Activated T-helper 2 cell treated with anti-CD3 and anti-CD28 coated beads, Interferon-gamma antibody, Interleukin-2, Interleukin-4, amounts not matched to agents 10 μg/mL and 5 μg/mL and 100 μg/mL, durations not matched to agents 14 hours and 24 hours and 36 hours (primary cell): ENCODE measurements at regions of chr7 and their contacts with region 1.

Region 1: GRCh38 chr7:134690016-134690415 is 43.4 kb downstream of the BPGM start:
- DNase-seq: no peak
- H3K4me3 Mint-ChIP-seq: no peak overlapping the region
- H3K27ac Mint-ChIP-seq: peak overlapping the region; percentile 36
- H3K4me1 Mint-ChIP-seq: peaks cover 25% of the 10 kb centered on the region
- H3K27me3 Mint-ChIP-seq: no peaks in the 10 kb centered on the region

Region 2: DNA sequence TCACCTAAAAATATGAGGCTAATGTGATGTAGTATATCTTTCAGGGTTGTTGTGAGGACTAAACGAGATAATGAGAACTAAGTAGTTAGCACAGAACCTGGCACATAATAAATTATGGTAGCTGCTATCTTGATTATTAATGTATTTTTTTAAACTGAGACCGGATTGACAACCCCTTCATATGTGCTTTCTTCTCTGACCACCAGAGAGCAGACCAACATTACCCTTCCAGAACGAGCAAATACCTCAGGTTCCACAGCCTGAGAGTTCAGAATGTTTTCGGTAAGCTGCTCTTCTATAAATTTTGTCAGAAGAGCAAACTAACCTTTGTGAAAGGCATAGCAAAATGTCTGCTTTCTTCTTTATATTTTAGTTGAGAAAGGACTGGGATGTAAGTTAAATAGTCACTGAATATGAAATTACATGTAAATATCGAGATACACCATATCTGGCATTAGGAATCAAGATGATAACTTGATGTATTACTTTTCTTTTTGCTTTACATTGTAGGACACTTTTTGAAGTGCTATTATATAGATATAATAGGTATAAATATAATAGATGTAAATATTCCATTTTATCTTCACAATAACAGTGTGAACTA is 57.0 kb before region 1 on chr7:
- intact Hi-C with region 1: loop called (anchors 5 kb)
- DNase-seq: no peak
- H3K4me3 Mint-ChIP-seq: no peak overlapping the region
- H3K27ac Mint-ChIP-seq: no peak overlapping the region
- H3K4me1 Mint-ChIP-seq: peaks cover 25% of the 10 kb centered on the region
- H3K27me3 Mint-ChIP-seq: peaks cover 8% of the 10 kb centered on the region

Region 3: GRCh38 chr7:134737566-134738345 is 47.7 kb after region 1 on chr7:
- intact Hi-C with region 1: no loop called
- DNase-seq: peak; percentile 28
- H3K4me3 Mint-ChIP-seq: no peak overlapping the region
- H3K27ac Mint-ChIP-seq: peak overlapping the region; percentile 90
- H3K4me1 Mint-ChIP-seq: peaks cover 55% of the 10 kb centered on the region
- H3K27me3 Mint-ChIP-seq: no peaks in the 10 kb centered on the region

Region 4: DNA sequence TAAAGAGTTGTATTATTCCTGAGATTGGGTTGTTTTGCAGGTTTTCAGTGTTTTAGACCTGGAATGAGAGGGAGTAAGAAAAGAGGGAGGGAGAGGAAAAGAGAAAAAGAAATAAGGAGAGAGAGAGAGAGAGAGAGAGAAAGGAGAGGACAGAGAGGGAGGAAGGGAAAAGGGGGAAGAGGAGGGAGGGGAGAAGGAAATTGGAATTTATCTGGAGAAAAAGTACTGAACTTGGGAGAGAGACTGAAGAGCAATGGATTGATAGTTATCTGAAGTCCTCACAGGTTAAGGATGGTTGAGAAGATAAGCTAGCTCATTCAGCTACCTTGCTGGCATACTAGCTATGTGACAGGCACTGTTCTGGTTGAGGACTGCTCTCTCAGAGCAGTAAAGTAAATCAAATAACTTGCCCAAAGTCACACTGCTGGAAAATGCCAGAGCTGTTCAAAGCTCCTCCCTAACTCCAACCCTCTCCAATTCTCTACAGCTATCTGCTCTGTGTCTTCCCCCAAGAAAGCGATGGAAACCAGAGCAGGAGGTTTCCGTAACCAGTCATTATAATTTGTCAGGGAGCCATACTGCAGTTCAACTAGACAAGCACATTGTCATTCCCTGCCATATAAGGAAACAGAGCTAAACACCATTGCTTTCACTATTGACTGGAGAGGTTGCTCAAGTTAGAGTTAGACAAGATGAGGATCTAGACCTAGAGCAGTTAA is 100.1 kb after region 1 on chr7:
- intact Hi-C with region 1: no loop called
- DNase-seq: no peak
- H3K4me3 Mint-ChIP-seq: no peak overlapping the region
- H3K27ac Mint-ChIP-seq: no peak overlapping the region
- H3K4me1 Mint-ChIP-seq: no peaks in the 10 kb centered on the region
- H3K27me3 Mint-ChIP-seq: no peaks in the 10 kb centered on the region